Heart right ventricle (tissue), 16 donors: ENCODE measurements at regions of chr1 and their contacts with region 1.

Region 1: GRCh38 chr1:36350659-36351226 is 27.3 kb upstream of the EVA1B start:
- DNase-seq: no peak
- ATAC-seq: peak; percentile 41 to 62 (median 56)
- H3K4me3 ChIP-seq: no peak overlapping the region
- H3K27ac ChIP-seq: peak overlapping the region in 7 of 10 donors; percentile 58 to 84 (median 79)
- H3K4me1 ChIP-seq: peaks cover 17 to 50% (median 39%) of the 10 kb centered on the region in 9 donors
- H3K27me3 ChIP-seq: no peaks in the 10 kb centered on the region
- CTCF ChIP-seq: no peak

Region 2: DNA sequence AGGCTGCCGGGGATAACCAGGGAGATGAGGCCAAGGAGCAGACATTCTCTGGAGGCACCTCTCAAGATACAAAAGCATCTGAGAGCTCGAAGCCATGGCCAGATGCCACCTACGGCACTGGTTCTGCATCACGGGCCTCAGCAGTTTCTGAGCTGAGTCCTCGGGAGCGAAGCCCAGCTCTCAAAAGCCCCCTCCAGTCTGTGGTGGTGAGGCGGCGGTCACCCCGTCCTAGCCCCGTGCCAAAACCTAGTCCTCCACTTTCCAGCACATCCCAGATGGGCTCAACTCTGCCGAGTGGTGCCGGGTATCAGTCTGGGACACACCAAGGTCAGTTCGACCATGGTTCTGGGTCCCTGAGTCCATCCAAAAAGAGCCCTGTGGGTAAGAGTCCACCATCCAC is 63.9 kb before region 1 on chr1:
- intact Hi-C with region 1: no loop called
- DNase-seq: no peak
- ATAC-seq: peak in 1 of 8 donors; percentile 31
- H3K4me3 ChIP-seq: no peak overlapping the region
- H3K27ac ChIP-seq: peak overlapping the region in 3 of 10 donors; percentile 17 to 61 (median 49)
- H3K4me1 ChIP-seq: peaks cover 3 to 77% (median 53%) of the 10 kb centered on the region in 9 donors
- H3K27me3 ChIP-seq: no peaks in the 10 kb centered on the region
- CTCF ChIP-seq: no peak

Region 3: DNA sequence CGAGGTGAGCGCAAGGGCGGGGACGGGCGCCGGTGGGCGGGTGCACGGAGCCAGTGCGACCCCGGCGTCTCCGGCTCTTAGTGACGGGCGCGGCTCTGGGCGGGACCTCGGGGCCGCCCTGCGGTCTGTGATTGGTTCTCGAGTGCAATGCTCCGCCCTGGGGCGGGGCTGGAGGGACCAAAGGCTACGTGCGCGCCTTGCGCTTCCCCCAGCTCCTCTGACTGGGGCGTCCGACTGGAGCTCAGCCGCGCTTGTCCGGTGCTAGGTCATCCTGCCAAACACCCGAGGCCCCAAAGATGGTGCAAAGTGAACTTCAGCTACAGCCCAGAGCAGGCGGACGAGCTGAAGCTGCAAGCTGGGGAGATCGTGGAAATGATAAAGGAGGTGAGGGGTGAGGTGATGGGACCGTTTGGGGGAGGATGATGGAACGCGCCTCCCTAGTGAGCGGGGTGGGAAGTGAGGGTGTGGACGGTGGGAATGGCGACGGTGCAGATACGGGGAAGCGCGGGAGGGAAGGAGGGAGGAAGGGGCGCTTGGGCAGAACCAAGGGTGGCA is 43.8 kb before region 1 on chr1:
- intact Hi-C with region 1: no loop called
- DNase-seq: peak; percentile 91 to 93
- ATAC-seq: peak; percentile 97 to 99 (median 98)
- H3K4me3 ChIP-seq: peak overlapping the region; percentile 65 to 98 (median 84)
- H3K27ac ChIP-seq: peak overlapping the region; percentile 48 to 91 (median 80)
- H3K4me1 ChIP-seq: peaks cover 4 to 33% (median 18%) of the 10 kb centered on the region in 9 donors
- H3K27me3 ChIP-seq: no peaks in the 10 kb centered on the region
- CTCF ChIP-seq: no peak

Region 4: GRCh38 chr1:36397378-36398230 is 46.9 kb after region 1 on chr1 and contains the start of gene LSM10:
- intact Hi-C with region 1: loop called in 1 of 10 experiments (anchors 1 kb)
- DNase-seq: peak; percentile 92 to 95
- ATAC-seq: peak; percentile 94 to 98 (median 96)
- H3K4me3 ChIP-seq: peak within 1 kb of the TSS; percentile 56 to 98 (median 76)
- H3K27ac ChIP-seq: peak within 1 kb of the TSS; percentile 46 to 97 (median 90)
- H3K4me1 ChIP-seq: peaks cover 5 to 45% (median 18%) of the 10 kb centered on the region in 9 donors
- H3K27me3 ChIP-seq: no peaks in the 10 kb centered on the region
- CTCF ChIP-seq: peak in 2 of 9 donors; percentile 9
- total RNA-seq, gene LSM10: 35.2 to 69.6 (median 44.7) TPM

Region 5: GRCh38 chr1:36406440-36406839 is 55.7 kb after region 1 on chr1:
- intact Hi-C with region 1: loop called in 1 of 10 experiments (anchors 5 kb)
- DNase-seq: no peak
- ATAC-seq: no peak
- H3K4me3 ChIP-seq: no peak overlapping the region
- H3K27ac ChIP-seq: no peak overlapping the region
- H3K4me1 ChIP-seq: peaks cover 0 to 3% (median 0%) of the 10 kb centered on the region in 9 donors
- H3K27me3 ChIP-seq: no peaks in the 10 kb centered on the region
- CTCF ChIP-seq: no peak

Region 6: DNA sequence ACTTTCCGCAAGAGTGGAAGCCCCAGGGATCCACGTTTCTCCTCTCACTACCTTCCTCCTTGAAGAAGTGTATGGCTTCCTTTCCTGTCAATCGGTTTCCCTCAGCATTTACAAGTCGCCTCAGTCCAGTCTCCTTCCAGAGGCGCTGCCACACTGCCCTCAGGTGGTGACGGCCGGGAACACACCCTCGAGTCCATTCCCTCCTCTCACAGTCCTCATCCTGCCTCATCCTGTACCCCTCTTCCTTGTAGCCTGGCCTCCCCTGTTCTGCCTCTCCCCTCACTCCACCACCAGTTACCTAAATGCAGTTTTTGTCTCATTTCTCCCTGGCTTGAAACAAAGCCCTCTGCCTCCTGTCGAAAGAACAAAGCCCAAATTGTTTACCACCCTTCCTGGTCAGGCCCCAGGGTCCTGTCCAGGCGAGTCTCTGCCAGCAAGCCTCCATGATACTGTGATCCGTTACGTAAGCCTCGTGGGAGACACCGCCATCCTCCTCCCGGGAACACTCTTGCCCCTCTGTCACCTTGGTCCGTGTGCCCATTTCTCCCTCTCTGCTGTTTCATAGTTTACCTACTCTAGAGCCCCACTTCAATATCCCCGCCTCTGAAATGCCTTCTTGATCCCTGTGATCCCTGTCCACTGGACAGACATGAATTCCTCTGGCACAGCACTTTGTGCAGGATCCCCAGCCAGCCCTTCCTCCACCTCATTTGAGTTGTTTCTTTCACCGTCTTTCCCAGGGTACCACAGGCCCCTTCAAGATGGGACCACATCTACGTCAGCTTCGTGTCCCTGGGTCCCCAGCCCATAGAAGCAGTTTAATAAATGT is 70.3 kb after region 1 on chr1:
- intact Hi-C with region 1: loop called in 1 of 10 experiments (anchors 5 kb)
- DNase-seq: peak; percentile 90 to 91
- ATAC-seq: peak; percentile 89 to 98 (median 94)
- H3K4me3 ChIP-seq: no peak overlapping the region
- H3K27ac ChIP-seq: peak overlapping the region in 2 of 10 donors; percentile 8 to 60
- H3K4me1 ChIP-seq: peaks cover 4 to 18% (median 13%) of the 10 kb centered on the region in 9 donors
- H3K27me3 ChIP-seq: no peaks in the 10 kb centered on the region
- CTCF ChIP-seq: peak; percentile 90 to 97 (median 95)

Region 7: DNA sequence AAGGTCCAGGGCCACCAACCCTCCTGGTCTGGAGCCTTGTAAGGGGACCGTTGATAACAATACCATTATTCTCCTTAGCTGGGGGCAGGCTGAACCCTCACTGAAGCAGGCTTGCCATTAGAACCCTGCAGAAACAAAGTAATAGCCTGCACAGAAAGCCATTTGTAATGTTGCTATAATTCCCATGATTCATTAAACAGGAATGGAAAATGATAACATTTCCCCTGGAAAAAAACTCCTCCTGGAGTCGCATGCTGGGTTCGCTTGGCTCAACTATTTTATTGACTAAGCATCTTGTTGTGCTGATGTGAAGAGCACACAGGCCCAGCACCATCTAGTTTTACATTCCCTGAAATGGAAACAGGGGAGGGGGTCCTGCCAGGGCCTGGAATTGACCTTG is 287.5 kb after region 1 on chr1:
- intact Hi-C with region 1: no loop called
- DNase-seq: no peak
- ATAC-seq: no peak
- H3K4me3 ChIP-seq: no peak overlapping the region
- H3K27ac ChIP-seq: no peak overlapping the region
- H3K4me1 ChIP-seq: no peaks in the 10 kb centered on the region
- H3K27me3 ChIP-seq: peaks cover 0 to 41% (median 19%) of the 10 kb centered on the region in 7 donors
- CTCF ChIP-seq: no peak